Activated T-helper 1 cell treated with anti-CD3 and anti-CD28 coated beads, Interleukin-12 subunit alpha, Interleukin-12 subunit beta, Interleukin-2, Interleukin-4 antibody, amounts not matched to agents 30 ng/mL and 10 ng/mL and 1 ng/mL, durations not matched to agents 14 hours and 24 hours and 36 hours (primary cell): ENCODE measurements at regions of chr17 and their contacts with region 1.

Region 1: DNA sequence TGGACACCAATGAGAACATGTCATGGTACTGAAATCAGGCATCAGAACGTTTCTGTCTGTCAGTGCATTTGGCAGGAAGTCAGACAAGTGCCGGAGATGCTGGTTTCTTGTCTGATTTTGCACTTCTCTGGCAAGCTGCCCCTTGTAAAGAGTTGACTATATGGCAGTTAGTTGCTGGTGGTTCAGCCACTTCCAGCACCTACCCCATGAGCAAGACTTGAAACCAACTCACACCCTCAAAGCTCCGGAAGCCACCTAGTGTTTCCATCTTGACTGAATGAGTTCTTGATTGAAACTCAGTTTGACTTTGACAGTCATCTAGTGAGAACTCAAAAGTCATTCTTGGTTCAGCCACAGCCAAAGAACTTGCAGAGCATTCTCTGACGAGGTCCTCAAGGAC is 225.1 kb downstream of the SPECC1 start:
- DNase-seq: peak; percentile 73
- H3K4me3 Mint-ChIP-seq: peak overlapping the region; percentile 36
- H3K27ac Mint-ChIP-seq: peak overlapping the region; percentile 81
- H3K4me1 Mint-ChIP-seq: peaks cover 39% of the 10 kb centered on the region
- H3K27me3 Mint-ChIP-seq: no peaks in the 10 kb centered on the region

Region 2: GRCh38 chr17:20155258-20156195 is 78.7 kb before region 1 on chr17:
- intact Hi-C with region 1: loop called (anchors 1 kb)
- DNase-seq: peak; percentile 96
- H3K4me3 Mint-ChIP-seq: no peak overlapping the region
- H3K27ac Mint-ChIP-seq: no peak overlapping the region
- H3K4me1 Mint-ChIP-seq: no peaks in the 10 kb centered on the region
- H3K27me3 Mint-ChIP-seq: peaks cover 16% of the 10 kb centered on the region

Region 3: DNA sequence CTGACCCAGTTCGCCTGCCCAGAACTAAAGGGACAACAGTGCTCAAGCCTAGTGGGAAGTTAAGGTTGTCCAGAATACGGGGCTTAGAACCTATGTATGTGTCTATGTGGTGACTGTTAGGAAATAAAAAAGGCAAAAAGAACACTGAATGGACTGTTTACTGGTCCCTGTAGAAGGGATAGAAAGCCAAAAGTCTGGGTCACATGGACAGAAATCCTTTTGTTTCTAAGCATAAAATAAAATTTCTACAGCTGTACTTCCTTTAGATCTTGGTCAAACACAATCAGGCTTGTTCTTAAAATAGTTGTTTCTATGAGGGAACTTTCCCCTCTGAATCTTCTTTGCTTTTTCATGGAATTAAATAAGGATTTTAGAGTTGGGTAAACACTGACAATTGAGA is 20.3 kb after region 1 on chr17:
- intact Hi-C with region 1: loop called (anchors 2 kb)
- DNase-seq: no peak
- H3K4me3 Mint-ChIP-seq: no peak overlapping the region
- H3K27ac Mint-ChIP-seq: peak overlapping the region; percentile 78
- H3K4me1 Mint-ChIP-seq: peaks cover 39% of the 10 kb centered on the region
- H3K27me3 Mint-ChIP-seq: no peaks in the 10 kb centered on the region

Region 4: DNA sequence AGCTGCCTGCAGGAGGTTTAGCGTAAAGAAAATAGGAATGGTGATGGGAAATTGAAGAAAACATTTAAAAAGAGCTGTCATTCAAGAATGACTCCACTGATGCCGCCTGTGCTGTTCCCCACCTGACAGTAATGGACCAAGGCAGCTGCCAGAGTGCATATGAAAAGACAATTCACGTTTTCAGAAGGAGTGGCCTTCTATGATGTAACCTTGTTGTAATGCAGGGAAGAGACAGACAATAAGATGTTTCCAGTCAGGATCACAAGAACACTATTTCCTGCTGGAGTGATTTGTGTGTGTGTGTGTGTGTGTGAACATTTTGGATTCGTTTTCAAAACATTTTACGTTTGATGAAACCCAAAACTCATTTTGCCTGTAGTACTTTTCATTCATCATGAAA is 29.3 kb after region 1 on chr17:
- intact Hi-C with region 1: loop called (anchors 2 kb)
- DNase-seq: no peak
- H3K4me3 Mint-ChIP-seq: no peak overlapping the region
- H3K27ac Mint-ChIP-seq: no peak overlapping the region
- H3K4me1 Mint-ChIP-seq: peaks cover 26% of the 10 kb centered on the region
- H3K27me3 Mint-ChIP-seq: no peaks in the 10 kb centered on the region

Region 5: GRCh38 chr17:20271011-20271610 is 36.8 kb after region 1 on chr17:
- intact Hi-C with region 1: loop called (anchors 1 kb)
- DNase-seq: no peak
- H3K4me3 Mint-ChIP-seq: peak overlapping the region; percentile 45
- H3K27ac Mint-ChIP-seq: peak overlapping the region; percentile 74
- H3K4me1 Mint-ChIP-seq: peaks cover 62% of the 10 kb centered on the region
- H3K27me3 Mint-ChIP-seq: no peaks in the 10 kb centered on the region

Region 6: GRCh38 chr17:20280851-20281250 is 46.6 kb after region 1 on chr17:
- intact Hi-C with region 1: loop called (anchors 1 kb)
- DNase-seq: no peak
- H3K4me3 Mint-ChIP-seq: no peak overlapping the region
- H3K27ac Mint-ChIP-seq: peak overlapping the region; percentile 44
- H3K4me1 Mint-ChIP-seq: peaks cover 44% of the 10 kb centered on the region
- H3K27me3 Mint-ChIP-seq: peaks cover 3% of the 10 kb centered on the region

Region 7: GRCh38 chr17:20307326-20307910 is 73.1 kb after region 1 on chr17:
- intact Hi-C with region 1: loop called (anchors 5 kb)
- DNase-seq: no peak
- H3K4me3 Mint-ChIP-seq: no peak overlapping the region
- H3K27ac Mint-ChIP-seq: no peak overlapping the region
- H3K4me1 Mint-ChIP-seq: no peaks in the 10 kb centered on the region
- H3K27me3 Mint-ChIP-seq: no peaks in the 10 kb centered on the region